ENCODE measurements at regions of chr4 and their contacts with region 1.

Region 1: GRCh38 chr4:12421364-12421763 is 992.7 kb upstream of the HS3ST1 start:
- DNase-seq: no peak
- ATAC-seq: no peak
- H3K4me3 ChIP-seq: no peak overlapping the region
- H3K27ac ChIP-seq: no peak overlapping the region
- H3K4me1 ChIP-seq: no peaks in the 10 kb centered on the region
- H3K27me3 ChIP-seq: no peaks in the 10 kb centered on the region
- CTCF ChIP-seq: no peak
- EP300 ChIP-seq: no peak
- POLR2A ChIP-seq: no peak
- RAD21 ChIP-seq: no peak

Region 2: DNA sequence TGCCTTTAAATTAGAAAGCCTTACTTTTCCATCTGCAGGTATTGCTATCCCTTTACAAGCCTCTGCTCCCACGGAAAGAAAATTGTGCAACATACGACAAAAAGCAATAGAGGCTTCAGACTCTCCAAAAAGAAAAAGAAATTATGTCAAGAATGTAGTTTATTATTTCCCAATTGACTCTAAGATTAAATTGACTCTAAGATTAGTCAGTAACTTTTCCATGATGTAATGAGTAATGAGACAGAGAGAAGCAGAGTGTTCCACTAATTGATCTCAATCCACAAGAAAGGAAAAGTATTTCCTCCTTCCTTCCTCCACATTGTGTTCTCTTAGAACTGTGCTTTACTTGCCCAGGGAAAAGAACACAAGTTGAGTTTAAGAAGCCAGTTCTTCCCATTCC is 647.0 kb before region 1 on chr4:
- CTCF ChIA-PET with region 1: no interaction called
- POLR2A ChIA-PET with region 1: no interaction called
- in situ Hi-C with region 1: no loop called
- intact Hi-C with region 1: loop called (anchors 5 kb)
- DNase-seq: no peak
- ATAC-seq: no peak
- H3K4me3 ChIP-seq: no peak overlapping the region
- H3K27ac ChIP-seq: no peak overlapping the region
- H3K4me1 ChIP-seq: no peaks in the 10 kb centered on the region
- H3K27me3 ChIP-seq: no peaks in the 10 kb centered on the region
- CTCF ChIP-seq: no peak
- EP300 ChIP-seq: no peak
- POLR2A ChIP-seq: no peak
- RAD21 ChIP-seq: no peak

Region 3: GRCh38 chr4:12359420-12359819 is 61.9 kb before region 1 on chr4:
- CTCF ChIA-PET with region 1: no interaction called
- POLR2A ChIA-PET with region 1: no interaction called
- in situ Hi-C with region 1: no loop called
- intact Hi-C with region 1: no loop called
- DNase-seq: no peak
- ATAC-seq: no peak
- H3K4me3 ChIP-seq: no peak overlapping the region
- H3K27ac ChIP-seq: no peak overlapping the region
- H3K4me1 ChIP-seq: no peaks in the 10 kb centered on the region
- H3K27me3 ChIP-seq: no peaks in the 10 kb centered on the region
- CTCF ChIP-seq: no peak
- EP300 ChIP-seq: no peak
- POLR2A ChIP-seq: no peak
- RAD21 ChIP-seq: no peak